HEK293T (cell line): ENCODE measurements at regions of chr4 and their contacts with region 1.

Region 1: GRCh38 chr4:129264008-129264657 is 168.2 kb downstream of the C4orf33 start:
- DNase-seq: no peak

Region 2: DNA sequence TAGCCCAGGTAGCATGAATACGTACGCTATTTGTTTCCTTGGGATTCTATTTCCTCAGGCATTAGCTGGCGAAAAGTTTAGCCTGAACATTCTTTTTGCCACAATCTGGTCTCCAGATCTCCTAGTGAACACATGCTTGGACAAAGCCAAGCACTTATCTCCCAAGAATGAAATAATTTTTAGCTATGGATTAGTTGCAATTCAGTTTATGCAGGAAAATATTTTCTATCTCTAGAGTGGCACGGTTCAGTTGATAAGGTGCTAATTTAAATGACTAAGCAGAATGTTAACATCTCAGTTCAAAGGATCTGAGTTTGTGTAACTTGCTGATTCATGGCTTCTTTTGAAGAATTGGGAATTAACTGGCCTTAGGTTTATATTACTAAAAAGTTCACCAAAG is 512.8 kb before region 1 on chr4:
- CTCF ChIA-PET with region 1: interaction called, 12 read pairs
- POLR2A ChIA-PET with region 1: no interaction called
- DNase-seq: no peak

Region 3: DNA sequence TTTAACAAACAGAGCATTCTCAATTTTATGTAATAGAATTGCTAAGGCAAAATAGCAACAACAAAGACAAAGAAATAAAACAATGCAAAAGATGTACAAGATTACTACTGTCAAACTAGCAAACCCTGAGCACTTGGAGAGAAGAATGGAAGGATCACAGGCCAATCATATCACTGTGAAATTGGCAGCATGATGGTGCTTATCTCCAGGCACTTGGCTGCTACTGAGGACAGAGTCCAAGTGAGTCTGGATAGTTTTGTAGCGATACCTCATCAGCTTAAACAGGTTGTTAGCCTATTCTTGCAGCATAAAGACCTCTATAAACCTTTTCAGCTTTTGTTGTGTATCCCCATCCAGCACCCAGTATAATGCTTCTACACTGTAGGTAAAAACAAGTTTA is 50.4 kb before region 1 on chr4:
- CTCF ChIA-PET with region 1: no interaction called
- POLR2A ChIA-PET with region 1: no interaction called
- DNase-seq: no peak

Region 4: DNA sequence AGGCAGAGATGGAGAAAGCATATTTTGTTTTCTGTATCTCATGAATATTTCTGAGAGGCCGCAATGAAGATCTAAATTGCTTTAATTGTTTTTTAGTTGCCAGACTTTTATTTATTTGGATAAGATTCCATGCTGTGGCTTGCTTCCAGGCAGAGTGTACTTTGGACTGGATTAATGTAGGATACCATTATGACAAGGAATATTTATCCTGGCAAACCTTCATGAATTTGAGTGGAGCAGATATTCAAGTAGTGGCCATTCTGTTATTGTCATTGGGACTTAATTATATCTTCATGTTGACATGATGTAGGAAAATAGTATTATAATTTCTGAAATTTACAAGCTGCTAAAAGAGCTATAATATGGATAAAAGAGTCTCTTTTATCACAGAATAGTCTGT is 14.7 kb after region 1 on chr4:
- CTCF ChIA-PET with region 1: no interaction called
- POLR2A ChIA-PET with region 1: no interaction called
- DNase-seq: no peak